Heart left ventricle (tissue), 16 donors: ENCODE measurements at regions of chr1 and their contacts with region 1.

Region 1: GRCh38 chr1:247331172-247331991 is at the start of gene ZNF496:
- DNase-seq: peak; percentile 87 to 89 (median 88)
- ATAC-seq: peak; percentile 68 to 86 (median 82)
- H3K4me3 ChIP-seq: peak within 1 kb of the TSS; percentile 81 to 99 (median 97)
- H3K27ac ChIP-seq: peak within 1 kb of the TSS; percentile 82 to 98 (median 94)
- H3K4me1 ChIP-seq: peaks cover 6 to 55% (median 38%) of the 10 kb centered on the region in 12 donors
- H3K27me3 ChIP-seq: no peaks in the 10 kb centered on the region
- CTCF ChIP-seq: no peak
- POLR2A ChIP-seq: peak in 1 of 2 donors; percentile 56
- total RNA-seq, gene ZNF496: 13.2 to 37.9 (median 16.5) TPM

Region 2: DNA sequence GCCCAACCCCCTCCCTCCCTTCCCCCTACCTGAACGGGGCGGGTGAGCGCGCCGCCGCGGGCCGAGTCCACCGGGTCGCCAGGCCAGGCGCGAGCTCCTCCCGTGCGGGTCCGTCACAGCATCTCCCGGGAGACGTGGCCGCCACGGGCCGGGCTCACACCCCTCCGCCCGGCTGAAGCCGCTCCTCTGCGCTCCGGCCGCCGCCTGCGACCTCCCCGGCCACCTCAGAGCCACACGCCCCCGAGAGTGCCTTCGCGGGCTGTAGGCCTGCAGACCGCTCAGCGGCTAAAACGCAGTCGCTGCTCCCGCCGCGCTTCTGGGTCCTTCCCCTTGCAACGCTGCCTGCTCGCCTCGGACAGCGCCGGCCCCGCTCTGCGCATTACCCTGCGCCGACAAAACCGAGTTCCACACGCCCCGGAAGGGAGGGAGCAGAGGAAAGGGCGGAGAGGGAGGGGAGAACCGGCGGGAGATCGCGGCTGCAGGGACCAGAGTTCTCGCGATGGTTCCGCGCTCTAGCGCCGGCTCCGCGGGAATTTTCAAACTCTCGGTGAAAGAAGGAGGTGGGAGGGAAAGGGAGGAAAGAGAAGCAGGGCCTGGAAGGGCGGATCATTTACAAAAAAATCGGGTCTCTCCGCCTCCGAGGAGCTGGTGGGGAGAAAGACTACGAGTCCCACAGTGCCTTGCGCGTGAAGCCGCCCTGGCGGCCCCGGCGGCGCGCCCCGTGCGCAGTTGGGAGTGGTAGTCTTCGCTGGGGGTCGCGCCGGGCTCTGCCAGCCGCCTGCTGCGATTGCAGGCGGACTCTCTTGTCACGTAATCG is 399.6 kb before region 1 on chr1 and contains the start of gene AHCTF1:
- intact Hi-C with region 1: loop called in 1 of 10 experiments (anchors 10 kb)
- DNase-seq: peak; percentile 97 to 98 (median 97)
- ATAC-seq: peak; percentile 98 to 99 (median 99)
- H3K4me3 ChIP-seq: peak within 1 kb of the TSS; percentile 61 to 98 (median 90)
- H3K27ac ChIP-seq: peak within 1 kb of the TSS; percentile 89 to 99 (median 96)
- H3K4me1 ChIP-seq: peaks cover 0 to 29% (median 18%) of the 10 kb centered on the region in 12 donors
- H3K27me3 ChIP-seq: no peaks in the 10 kb centered on the region
- CTCF ChIP-seq: peak in 2 of 12 donors; percentile 6 to 11
- POLR2A ChIP-seq: peak; percentile 79 to 98
- total RNA-seq, gene AHCTF1: 17.9 to 39.7 (median 19.9) TPM

Region 3: DNA sequence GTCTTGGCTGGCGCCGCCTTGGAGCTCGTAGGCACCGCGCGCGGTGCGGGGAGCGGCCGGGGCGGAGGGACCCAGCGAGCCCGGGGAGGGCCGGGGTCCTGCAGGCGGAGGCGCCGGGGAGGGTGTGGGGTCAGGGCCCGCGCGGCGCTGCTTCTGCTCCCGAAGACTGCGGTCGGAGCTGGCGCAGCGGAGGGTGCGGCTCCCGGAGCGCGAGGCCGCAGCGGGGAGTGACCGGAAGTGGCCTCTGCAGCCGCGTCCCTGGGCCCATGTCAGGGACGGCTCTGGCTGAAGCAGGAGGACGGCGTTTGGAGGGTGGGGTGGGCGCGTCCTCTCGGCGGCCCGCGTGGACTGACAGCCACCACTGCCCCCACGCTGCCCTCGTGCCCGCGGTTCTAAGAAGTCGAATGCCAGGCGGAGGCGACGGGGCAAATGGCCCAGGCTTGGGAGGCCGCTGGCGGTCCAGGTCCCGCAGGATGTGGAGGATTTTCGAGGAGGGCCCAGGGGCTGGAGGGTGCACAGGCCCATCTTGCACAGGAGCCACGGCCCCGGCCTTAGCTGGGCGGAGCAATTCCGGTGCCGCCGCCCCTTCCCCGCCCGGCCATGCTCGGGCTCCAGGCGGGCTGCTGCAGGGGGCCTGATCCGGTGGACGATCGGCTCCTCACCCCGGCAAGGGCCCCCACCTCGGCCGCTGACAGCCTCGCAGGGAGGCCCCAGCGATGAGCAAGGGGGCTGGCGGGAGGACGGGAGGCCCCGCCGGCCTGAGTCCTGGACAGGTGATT is 219.5 kb before region 1 on chr1:
- intact Hi-C with region 1: loop called in 1 of 10 experiments (anchors 5 kb)
- DNase-seq: peak; percentile 70 to 87 (median 79)
- ATAC-seq: peak; percentile 70 to 97 (median 92)
- H3K4me3 ChIP-seq: peak overlapping the region; percentile 51 to 89 (median 72)
- H3K27ac ChIP-seq: peak overlapping the region in 11 of 12 donors; percentile 61 to 88 (median 76)
- H3K4me1 ChIP-seq: peaks cover 0 to 26% (median 11%) of the 10 kb centered on the region in 12 donors
- H3K27me3 ChIP-seq: peaks cover 0 to 16% (median 0%) of the 10 kb centered on the region in 9 donors
- CTCF ChIP-seq: no peak
- POLR2A ChIP-seq: peak in 1 of 2 donors; percentile 55

Region 4: GRCh38 chr1:247373721-247374141 is 42.3 kb after region 1 on chr1:
- intact Hi-C with region 1: loop called in 4 of 10 experiments (anchors 2 to 5 kb)
- DNase-seq: peak in 4 of 5 donors; percentile 37 to 68 (median 62)
- ATAC-seq: peak in 3 of 4 donors; percentile 54 to 81 (median 68)
- H3K4me3 ChIP-seq: peak overlapping the region in 10 of 12 donors; percentile 29 to 63 (median 40)
- H3K27ac ChIP-seq: no peak overlapping the region
- H3K4me1 ChIP-seq: peaks cover 0 to 8% (median 0%) of the 10 kb centered on the region in 12 donors
- H3K27me3 ChIP-seq: peaks cover 0 to 8% (median 0%) of the 10 kb centered on the region in 9 donors
- CTCF ChIP-seq: peak; percentile 20 to 60 (median 48)
- POLR2A ChIP-seq: no peak